GM12878 (cell line): ENCODE measurements at regions of chr17 and their contacts with region 1.

Region 1: DNA sequence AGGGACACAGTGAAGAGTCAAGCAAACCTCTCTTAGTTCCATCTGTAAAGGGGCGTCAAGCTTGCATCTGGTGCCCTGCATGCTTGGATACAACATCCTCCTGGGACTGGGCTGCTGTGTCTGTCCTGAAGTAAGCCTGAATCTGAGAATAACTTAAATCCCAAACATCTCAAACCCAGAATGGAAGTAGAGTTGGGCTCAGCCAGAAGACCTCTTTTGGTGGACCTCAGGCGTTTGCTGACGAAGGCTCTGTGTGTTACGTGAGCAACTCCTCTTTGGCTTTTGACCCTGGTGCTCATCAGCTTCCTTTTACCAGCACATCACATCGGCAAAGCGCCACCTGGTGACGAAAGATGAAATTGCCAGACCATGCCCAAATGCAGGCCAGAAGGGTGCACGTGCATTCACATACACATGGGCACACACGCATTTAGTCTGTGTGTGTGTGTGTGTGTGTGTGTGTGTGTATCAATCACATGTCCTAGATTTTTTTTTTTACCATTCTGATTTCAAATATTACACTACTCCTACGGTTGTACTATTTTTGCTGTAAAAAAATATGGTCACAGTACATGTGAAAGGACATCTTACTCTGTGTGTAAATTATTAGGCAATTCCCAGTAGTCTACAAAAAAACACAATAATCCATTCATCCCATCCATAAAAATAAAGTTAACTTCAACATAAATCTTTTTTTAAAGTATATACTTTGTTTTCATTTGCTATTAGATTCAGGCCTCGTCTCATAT is 41.1 kb upstream of the FOXJ1 start:
- DNase-seq: peak; percentile 94
- ATAC-seq: peak; percentile 83
- H3K4me3 ChIP-seq: no peak overlapping the region
- H3K27ac ChIP-seq: peak overlapping the region; percentile 24; the same call in 1 of the 2 replicates
- H3K4me1 ChIP-seq: peaks cover 30% of the 10 kb centered on the region
- H3K27me3 ChIP-seq: no peaks in the 10 kb centered on the region
- CTCF ChIP-seq: peak; percentile 83 to 97 (median 93); a peak in 5 of 6 replicates
- EP300 ChIP-seq: no peak
- POLR2A ChIP-seq: no peak
- RAD21 ChIP-seq: peak; percentile 81

Region 2: DNA sequence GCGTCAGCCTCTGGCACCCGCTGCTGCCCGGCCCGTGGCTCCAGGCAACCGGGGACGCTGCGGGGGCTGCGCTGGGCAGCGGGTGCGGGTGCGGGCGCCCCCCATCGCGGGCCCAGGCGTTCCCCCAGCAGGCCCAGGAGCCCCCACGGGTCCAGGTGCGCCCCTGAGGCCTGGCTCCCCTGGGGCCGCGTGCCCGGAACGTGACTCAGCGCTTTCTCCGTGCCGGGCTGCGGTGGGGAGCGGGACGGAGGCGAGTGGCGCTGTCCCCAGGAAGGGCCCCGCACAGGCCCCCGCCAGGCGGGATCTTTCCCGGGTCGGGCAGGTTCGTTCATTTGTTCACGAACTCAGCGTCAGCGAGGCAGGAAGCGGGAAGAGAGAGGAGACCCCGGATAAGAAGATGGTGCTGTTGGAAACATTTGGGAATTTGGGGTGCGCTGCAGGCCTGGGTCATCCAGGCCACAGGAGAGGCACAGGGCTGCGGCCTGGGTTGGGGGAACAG is 60.2 kb before region 1 on chr17:
- CTCF ChIA-PET with region 1: interaction called, 162 read pairs
- POLR2A ChIA-PET with region 1: interaction called, 11 read pairs
- RAD21 ChIA-PET with region 1: interaction called, 125 read pairs
- SMC1A ChIA-PET with region 1: interaction called, 77 read pairs
- in situ Hi-C with region 1: no loop called
- intact Hi-C with region 1: loop called (anchors 1 kb)
- DNase-seq: no peak
- ATAC-seq: peak; percentile 9
- H3K4me3 ChIP-seq: peak overlapping the region; percentile 25; the same call in 1 of the 2 replicates
- H3K27ac ChIP-seq: no peak overlapping the region
- H3K4me1 ChIP-seq: peaks cover 6% of the 10 kb centered on the region
- H3K27me3 ChIP-seq: no peaks in the 10 kb centered on the region
- CTCF ChIP-seq: no peak
- EP300 ChIP-seq: no peak
- POLR2A ChIP-seq: no peak
- RAD21 ChIP-seq: no peak

Region 3: DNA sequence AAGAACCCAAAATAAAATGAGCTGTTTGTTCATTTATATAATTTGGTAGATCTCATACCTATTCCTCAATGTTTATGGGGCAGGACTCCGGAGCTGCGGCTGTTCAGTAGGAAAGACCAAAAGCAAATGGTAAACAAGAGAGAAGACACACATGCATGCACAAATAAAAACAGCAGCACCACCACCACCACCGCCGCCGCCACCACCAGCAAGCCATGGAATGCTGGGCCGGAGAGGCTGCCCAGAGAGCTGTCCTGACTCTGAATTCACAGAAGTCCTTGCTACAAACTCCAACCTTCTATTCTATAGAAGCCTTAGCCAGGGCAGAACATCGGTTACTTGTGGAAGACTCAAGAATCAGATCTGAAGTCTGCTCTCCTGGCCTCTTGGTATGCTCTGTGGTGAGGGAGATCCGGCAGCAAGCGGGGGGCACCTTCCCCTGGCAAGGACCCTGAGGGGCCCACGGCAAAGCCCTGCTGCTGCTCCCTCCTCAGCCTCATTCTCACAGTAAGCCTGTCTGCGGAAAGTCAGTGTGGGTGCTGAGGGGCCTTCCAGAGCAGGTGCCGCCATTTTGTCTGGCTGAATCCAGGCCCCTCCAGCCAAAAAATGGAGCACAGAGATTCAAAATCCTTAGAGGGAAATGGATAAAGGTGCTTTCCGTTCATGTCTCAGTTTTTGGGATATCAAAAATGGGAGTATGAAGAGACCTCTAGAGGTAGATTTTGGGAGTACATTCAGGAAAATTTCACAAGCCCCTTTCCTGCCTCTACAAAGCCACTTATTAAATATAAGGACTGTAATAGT is 34.8 kb before region 1 on chr17:
- CTCF ChIA-PET with region 1: interaction called, 10 read pairs
- POLR2A ChIA-PET with region 1: interaction called, 4 read pairs
- RAD21 ChIA-PET with region 1: interaction called, 6 read pairs
- SMC1A ChIA-PET with region 1: interaction called, 13 read pairs
- in situ Hi-C with region 1: no loop called
- intact Hi-C with region 1: no loop called
- DNase-seq: no peak
- ATAC-seq: no peak
- H3K4me3 ChIP-seq: no peak overlapping the region
- H3K27ac ChIP-seq: no peak overlapping the region
- H3K4me1 ChIP-seq: peaks cover 21% of the 10 kb centered on the region
- H3K27me3 ChIP-seq: no peaks in the 10 kb centered on the region
- CTCF ChIP-seq: peak; percentile 22 to 41 (median 26); a peak in 3 of 6 replicates
- EP300 ChIP-seq: no peak
- POLR2A ChIP-seq: no peak
- RAD21 ChIP-seq: no peak

Region 4: GRCh38 chr17:76160896-76161528 is 21.2 kb before region 1 on chr17:
- CTCF ChIA-PET with region 1: interaction called, 13 read pairs
- POLR2A ChIA-PET with region 1: no interaction called
- RAD21 ChIA-PET with region 1: no interaction called
- SMC1A ChIA-PET with region 1: interaction called, 5 read pairs
- in situ Hi-C with region 1: no loop called
- intact Hi-C with region 1: no loop called
- DNase-seq: no peak
- ATAC-seq: no peak
- H3K4me3 ChIP-seq: no peak overlapping the region
- H3K27ac ChIP-seq: no peak overlapping the region
- H3K4me1 ChIP-seq: no peaks in the 10 kb centered on the region
- H3K27me3 ChIP-seq: no peaks in the 10 kb centered on the region
- CTCF ChIP-seq: no peak
- EP300 ChIP-seq: no peak
- POLR2A ChIP-seq: no peak
- RAD21 ChIP-seq: no peak

Region 5: GRCh38 chr17:76240461-76241203 is 58.4 kb after region 1 on chr17 and contains the start of gene RNF157:
- CTCF ChIA-PET with region 1: interaction called, 45 read pairs
- POLR2A ChIA-PET with region 1: interaction called, 11 read pairs
- RAD21 ChIA-PET with region 1: interaction called, 20 read pairs
- SMC1A ChIA-PET with region 1: interaction called, 18 read pairs
- in situ Hi-C with region 1: no loop called
- intact Hi-C with region 1: loop called (anchors 5 kb)
- DNase-seq: no peak
- ATAC-seq: peak; percentile 74
- H3K4me3 ChIP-seq: peak within 1 kb of the TSS; percentile 56; the same call in 1 of the 2 replicates
- H3K27ac ChIP-seq: no peak within 1 kb of the TSS
- H3K4me1 ChIP-seq: peaks cover 20% of the 10 kb centered on the region
- H3K27me3 ChIP-seq: peaks cover 0 to 3% of the 10 kb centered on the region in 2 experiments; a peak in 2 of 4 replicates
- CTCF ChIP-seq: no peak
- EP300 ChIP-seq: no peak
- POLR2A ChIP-seq: no peak
- RAD21 ChIP-seq: no peak
- polyA plus RNA-seq, gene RNF157: 5.2 to 9.5 TPM

Region 6: GRCh38 chr17:76271669-76272540 is 89.7 kb after region 1 on chr17:
- CTCF ChIA-PET with region 1: interaction called, 160 read pairs
- POLR2A ChIA-PET with region 1: interaction called, 427 read pairs
- RAD21 ChIA-PET with region 1: interaction called, 419 read pairs
- SMC1A ChIA-PET with region 1: interaction called, 152 read pairs
- in situ Hi-C with region 1: no loop called
- intact Hi-C with region 1: no loop called
- DNase-seq: peak; percentile 91
- ATAC-seq: peak; percentile 66
- H3K4me3 ChIP-seq: peak overlapping the region; percentile 85
- H3K27ac ChIP-seq: peak overlapping the region; percentile 99
- H3K4me1 ChIP-seq: peaks cover 48% of the 10 kb centered on the region
- H3K27me3 ChIP-seq: no peaks in the 10 kb centered on the region
- CTCF ChIP-seq: peak in 1 of 3 experiments; percentile 12; a peak in 1 of 6 replicates
- EP300 ChIP-seq: peak; percentile 73 to 76; a peak in 3 of 4 replicates
- POLR2A ChIP-seq: peak; percentile 91
- RAD21 ChIP-seq: 0 out of 2 replicates have a peak, but pooled peaks have one; percentile 14